HepG2 (cell line): ENCODE measurements at regions of chr4 and their contacts with region 1.

Region 1: DNA sequence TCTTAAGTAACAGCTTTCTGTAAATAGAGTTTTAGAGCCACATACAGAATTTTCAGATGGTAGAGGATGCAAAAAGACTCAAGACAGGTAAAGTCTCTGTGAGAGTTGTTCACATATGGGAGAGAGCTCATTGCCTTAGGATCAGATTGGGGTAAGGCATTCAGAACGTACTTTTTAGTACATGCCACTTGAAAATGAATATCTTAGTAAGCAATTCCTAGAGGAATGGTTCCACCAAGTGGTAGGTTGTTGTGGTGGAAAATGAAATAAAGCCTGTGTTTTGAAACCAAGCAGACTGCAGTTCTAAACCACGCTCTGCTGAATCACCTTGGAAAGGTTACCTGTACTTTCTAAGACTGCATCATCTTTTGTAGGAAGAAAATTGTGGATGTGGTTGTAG is 547.0 kb upstream of the LCORL start:
- DNase-seq: no peak
- ATAC-seq: no peak
- H3K4me3 ChIP-seq: no peak overlapping the region
- H3K27ac ChIP-seq: no peak overlapping the region
- H3K4me1 ChIP-seq: peaks cover 66% of the 10 kb centered on the region
- H3K27me3 ChIP-seq: no peaks in the 10 kb centered on the region
- CTCF ChIP-seq: peak; percentile 45
- EP300 ChIP-seq: no peak
- POLR2A ChIP-seq: no peak
- RAD21 ChIP-seq: no peak

Region 2: DNA sequence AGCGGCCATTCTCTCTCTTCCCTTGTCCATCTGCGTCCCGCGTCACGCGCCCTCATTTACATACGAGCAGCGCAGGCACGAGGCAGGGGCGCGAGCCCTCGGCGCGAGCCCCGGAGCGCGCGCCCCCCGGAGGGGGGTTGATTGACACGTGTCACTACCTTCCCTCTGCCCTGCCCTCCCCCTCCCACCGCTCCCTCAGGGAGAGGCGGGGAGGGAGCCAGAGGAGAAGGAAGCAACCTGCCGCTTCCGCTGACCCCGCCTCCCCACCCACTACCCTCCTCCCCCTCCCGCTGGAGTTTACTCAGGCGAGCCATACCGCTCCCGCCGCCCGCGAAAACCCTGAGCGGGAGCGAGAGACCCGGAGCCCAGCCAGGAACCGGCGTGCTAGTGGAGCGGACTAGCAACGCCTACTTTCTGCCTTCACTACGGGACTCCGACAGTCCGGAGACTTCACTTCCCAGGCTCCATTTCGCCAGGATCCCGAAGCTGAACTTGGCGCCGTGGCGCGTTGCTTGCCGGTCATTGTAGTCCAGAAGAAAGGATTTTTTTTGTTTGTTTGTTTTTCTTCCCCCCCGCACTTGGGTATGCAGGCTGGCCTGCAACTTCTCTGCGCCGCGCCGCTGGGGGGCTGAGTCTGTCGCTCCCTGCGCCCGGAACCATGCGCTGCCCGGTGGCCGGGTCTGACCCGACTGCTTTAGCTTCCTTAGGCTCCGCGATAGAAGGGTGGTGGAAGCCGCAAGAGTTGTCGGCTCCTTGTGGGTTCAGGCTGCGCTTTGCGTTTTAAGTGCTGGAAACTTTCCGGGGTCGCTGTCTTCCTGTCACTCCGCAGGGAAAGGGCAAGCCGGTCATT is 546.7 kb before region 1 on chr4 and contains the start of gene LCORL:
- CTCF ChIA-PET with region 1: no interaction called
- POLR2A ChIA-PET with region 1: no interaction called
- in situ Hi-C with region 1: no loop called
- intact Hi-C with region 1: loop called (anchors 2 kb)
- DNase-seq: peak; percentile 96
- ATAC-seq: peak; percentile 90
- H3K4me3 ChIP-seq: peak within 1 kb of the TSS; percentile 89 to 97 (median 93)
- H3K27ac ChIP-seq: peak within 1 kb of the TSS; percentile 96
- H3K4me1 ChIP-seq: peaks cover 21% of the 10 kb centered on the region
- H3K27me3 ChIP-seq: peaks cover 0 to 15% of the 10 kb centered on the region in 2 experiments; a peak in 1 of 5 replicates
- CTCF ChIP-seq: peak; percentile 66
- EP300 ChIP-seq: no peak
- POLR2A ChIP-seq: peak; percentile 19 to 57; a peak in 3 of 4 replicates
- RAD21 ChIP-seq: no peak
- total RNA-seq, gene LCORL: 14.5 and 16.5 TPM in 2 replicates

Region 3: GRCh38 chr4:18536428-18536827 is 32.2 kb before region 1 on chr4:
- CTCF ChIA-PET with region 1: no interaction called
- POLR2A ChIA-PET with region 1: no interaction called
- in situ Hi-C with region 1: no loop called
- intact Hi-C with region 1: loop called (anchors 1 kb)
- DNase-seq: peak; percentile 31
- ATAC-seq: peak; percentile 89
- H3K4me3 ChIP-seq: no peak overlapping the region
- H3K27ac ChIP-seq: no peak overlapping the region
- H3K4me1 ChIP-seq: no peaks in the 10 kb centered on the region
- H3K27me3 ChIP-seq: no peaks in the 10 kb centered on the region
- CTCF ChIP-seq: peak; percentile 53
- EP300 ChIP-seq: no peak
- POLR2A ChIP-seq: no peak
- RAD21 ChIP-seq: no peak